ENCODE measurements at regions of chr2 and their contacts with region 1.

Region 1: DNA sequence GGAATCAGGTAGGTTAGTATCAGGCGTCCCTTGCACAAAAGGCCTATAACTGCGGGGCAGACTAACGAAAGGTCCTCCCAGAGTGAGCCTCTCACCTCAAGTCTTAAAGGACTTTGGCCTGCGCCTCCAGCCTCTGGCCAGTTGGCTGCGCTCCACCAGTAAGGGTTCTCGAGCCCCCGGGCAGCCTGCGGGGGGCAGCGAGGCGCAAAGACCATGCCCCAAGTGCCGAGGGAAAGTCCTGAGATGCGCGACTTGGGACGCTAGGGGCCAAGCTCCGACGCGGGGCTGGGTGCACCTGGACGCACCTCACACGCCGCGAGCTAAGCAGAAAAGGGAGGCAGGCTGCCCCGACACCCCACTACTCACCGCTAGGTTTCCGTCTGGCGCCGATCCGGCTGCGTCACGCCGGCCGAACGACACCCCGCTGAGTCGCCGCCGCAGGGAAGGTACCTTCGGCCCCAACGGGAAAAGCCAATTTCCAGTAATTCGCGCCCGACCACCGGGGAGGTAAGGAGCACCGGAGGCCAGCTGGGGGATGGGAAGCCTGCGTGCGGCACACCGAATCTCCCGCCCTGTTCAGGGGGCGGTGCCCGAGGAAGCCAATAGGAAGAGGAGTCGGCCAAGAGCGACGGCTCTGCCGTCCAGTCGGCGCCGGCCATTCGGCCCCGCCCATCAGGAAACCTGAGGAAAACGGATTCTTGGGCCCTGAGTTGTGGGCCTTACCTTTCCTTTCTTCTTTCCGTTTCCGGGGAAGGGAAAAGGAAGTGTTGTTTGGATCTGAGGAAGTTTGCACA is at the start of gene ORC2:
- DNase-seq: peak; percentile 88 to 97 (median 94)

Region 2: GRCh38 chr2:200747668-200748618 is 215.4 kb before region 1 on chr2:
- intact Hi-C with region 1: no loop called
- DNase-seq: no peak

Region 3: GRCh38 chr2:201064797-201065329 is 101.5 kb after region 1 on chr2:
- intact Hi-C with region 1: loop called (anchors 5 kb)
- DNase-seq: peak in 11 of 42 donors; percentile 16 to 74 (median 27)

Region 4: DNA sequence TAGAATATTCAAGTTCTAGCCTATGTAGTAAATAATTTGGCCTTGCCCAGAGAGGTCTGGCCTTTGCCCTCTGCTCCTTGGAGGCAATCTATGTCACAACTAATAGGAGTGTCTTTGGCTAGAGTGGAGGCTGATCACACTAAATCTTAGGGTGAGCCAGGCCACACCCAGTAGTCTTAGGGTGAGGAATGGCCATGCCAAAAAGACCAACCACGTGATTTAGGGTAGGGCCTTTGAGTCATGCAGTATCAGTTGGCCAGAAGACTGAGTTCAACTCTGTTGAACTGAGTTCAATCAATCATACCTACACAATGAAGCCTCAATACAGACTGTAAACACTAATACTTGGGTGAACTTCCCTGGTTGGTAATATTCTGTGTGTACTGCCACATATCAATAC is 419.8 kb after region 1 on chr2:
- intact Hi-C with region 1: no loop called
- DNase-seq: no peak